ENCODE measurements at regions of chr20 and their contacts with region 1.

Region 1: DNA sequence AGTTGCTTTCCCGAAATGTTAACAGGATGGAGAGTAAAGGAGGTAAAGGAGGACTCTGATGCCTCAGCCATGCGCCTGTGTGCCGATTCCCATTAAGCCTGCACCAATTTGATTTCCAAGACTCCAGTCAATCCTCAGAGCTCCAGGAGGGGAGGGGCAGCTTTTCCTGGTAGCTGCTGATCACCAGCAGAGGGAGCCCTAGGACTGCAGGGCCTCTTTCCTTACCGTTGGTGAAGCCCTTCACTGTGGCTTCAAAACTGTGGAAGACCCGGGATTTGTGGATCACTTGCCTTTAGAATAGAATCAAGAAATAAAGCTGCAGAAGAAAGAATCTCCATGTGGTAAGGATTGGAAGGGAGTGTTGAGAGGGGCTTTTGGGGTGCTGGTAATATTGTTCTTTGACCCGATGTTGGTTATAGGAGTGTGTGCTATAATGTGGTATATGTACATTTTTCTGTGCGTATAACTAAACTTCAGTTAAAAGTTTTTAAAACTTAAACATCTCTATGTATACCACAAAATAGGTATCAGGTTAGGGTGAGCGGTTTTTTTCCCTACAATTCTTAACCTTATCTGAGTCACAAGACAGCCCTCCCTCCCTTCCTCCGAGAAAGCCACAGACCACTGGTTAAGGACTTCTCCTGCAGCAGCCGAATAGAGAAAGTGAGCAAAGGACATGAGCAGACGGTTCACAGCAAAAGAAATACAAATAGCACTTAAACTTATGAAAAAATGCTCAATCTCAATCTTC is 6.9 kb upstream of the OSER1 start:
- DNase-seq: peak; percentile 41 to 80 (median 68)
- ATAC-seq: peak; percentile 68
- H3K4me3 ChIP-seq: peak overlapping the region; percentile 57
- H3K4me3 Mint-ChIP-seq: peak overlapping the region; percentile 76 to 90 (median 86)
- H3K27ac ChIP-seq: peak overlapping the region; percentile 75
- H3K27ac Mint-ChIP-seq: peak overlapping the region; percentile 81 to 99 (median 94)
- H3K4me1 ChIP-seq: peaks cover 29 to 33% of the 10 kb centered on the region in 2 donors
- H3K4me1 Mint-ChIP-seq: peaks cover 40 to 85% (median 72%) of the 10 kb centered on the region in 7 donors
- H3K27me3 ChIP-seq: no peaks in the 10 kb centered on the region
- H3K27me3 Mint-ChIP-seq: no peaks in the 10 kb centered on the region

Region 2: DNA sequence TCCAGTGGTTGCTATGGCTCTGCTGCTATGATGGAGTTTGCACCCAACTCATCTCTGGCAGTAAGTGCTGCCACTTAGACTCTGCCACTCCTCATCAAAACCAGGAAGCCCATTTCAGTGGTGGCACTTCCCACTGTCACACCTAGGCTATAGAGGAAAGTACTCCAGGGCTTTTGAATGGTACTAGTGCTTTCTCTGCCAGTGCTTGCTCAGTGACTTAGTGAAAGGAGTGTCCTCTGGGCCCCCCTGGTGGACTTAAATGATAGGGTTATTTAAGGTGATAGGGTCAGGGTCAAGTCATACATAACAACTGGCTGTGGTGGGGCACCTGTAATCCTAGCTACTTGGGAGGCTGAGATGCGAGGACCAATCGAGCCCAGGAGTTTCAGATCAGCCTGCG is 70.7 kb after region 1 on chr20:
- CTCF ChIA-PET with region 1: interaction called, 22 read pairs
- POLR2A ChIA-PET with region 1: interaction called, 4 read pairs
- intact Hi-C with region 1: loop called in 1 of 2 experiments (anchors 1 kb)
- DNase-seq: peak in 3 of 9 donors; percentile 4 to 13 (median 7)
- ATAC-seq: no peak
- H3K4me3 ChIP-seq: no peak overlapping the region
- H3K4me3 Mint-ChIP-seq: no peak overlapping the region
- H3K27ac ChIP-seq: no peak overlapping the region
- H3K27ac Mint-ChIP-seq: no peak overlapping the region
- H3K4me1 ChIP-seq: peaks cover 0 to 5% of the 10 kb centered on the region in 2 donors
- H3K4me1 Mint-ChIP-seq: peaks cover 0 to 5% (median 0%) of the 10 kb centered on the region in 7 donors
- H3K27me3 ChIP-seq: no peaks in the 10 kb centered on the region
- H3K27me3 Mint-ChIP-seq: peaks cover 0 to 6% (median 0%) of the 10 kb centered on the region in 5 donors

Region 3: GRCh38 chr20:44326391-44327159 is 109.1 kb after region 1 on chr20:
- CTCF ChIA-PET with region 1: interaction called, 13 read pairs
- POLR2A ChIA-PET with region 1: no interaction called
- intact Hi-C with region 1: no loop called
- DNase-seq: peak in 7 of 9 donors; percentile 2 to 26 (median 16)
- ATAC-seq: peak; percentile 62
- H3K4me3 ChIP-seq: no peak overlapping the region
- H3K4me3 Mint-ChIP-seq: peak overlapping the region in 8 of 10 donors; percentile 59 to 76 (median 68)
- H3K27ac ChIP-seq: no peak overlapping the region
- H3K27ac Mint-ChIP-seq: peak overlapping the region in 2 of 9 donors; percentile 42 to 83
- H3K4me1 ChIP-seq: no peaks in the 10 kb centered on the region
- H3K4me1 Mint-ChIP-seq: peaks cover 0 to 5% (median 0%) of the 10 kb centered on the region in 7 donors
- H3K27me3 ChIP-seq: no peaks in the 10 kb centered on the region
- H3K27me3 Mint-ChIP-seq: peaks cover 0 to 11% (median 4%) of the 10 kb centered on the region in 5 donors

Region 4: DNA sequence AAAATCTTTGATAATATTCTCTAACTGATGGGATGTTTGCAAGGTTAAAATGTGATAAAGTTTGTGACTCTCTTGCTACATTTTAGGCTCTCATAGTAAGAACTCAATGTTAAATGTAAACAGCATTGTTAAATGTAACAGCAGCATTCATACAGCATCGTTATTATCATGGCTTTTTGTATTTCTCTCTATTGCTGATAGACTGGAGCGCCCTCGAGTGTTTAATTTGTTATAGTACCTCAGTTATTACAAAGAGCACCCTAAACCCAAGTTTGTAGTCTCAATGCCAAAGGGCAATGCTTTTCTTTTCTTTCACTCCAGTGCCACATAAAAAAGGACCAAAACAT is 243.3 kb after region 1 on chr20:
- CTCF ChIA-PET with region 1: interaction called, 4 read pairs
- POLR2A ChIA-PET with region 1: no interaction called
- intact Hi-C with region 1: loop called in 1 of 2 experiments (anchors 1 kb)
- DNase-seq: peak in 5 of 9 donors; percentile 16 to 31 (median 24)
- ATAC-seq: peak; percentile 34
- H3K4me3 ChIP-seq: no peak overlapping the region
- H3K4me3 Mint-ChIP-seq: no peak overlapping the region
- H3K27ac ChIP-seq: no peak overlapping the region
- H3K27ac Mint-ChIP-seq: peak overlapping the region in 1 of 9 donors; percentile 43
- H3K4me1 ChIP-seq: no peaks in the 10 kb centered on the region
- H3K4me1 Mint-ChIP-seq: no peaks in the 10 kb centered on the region
- H3K27me3 ChIP-seq: no peaks in the 10 kb centered on the region
- H3K27me3 Mint-ChIP-seq: peaks cover 0 to 5% (median 0%) of the 10 kb centered on the region in 5 donors

Region 5: DNA sequence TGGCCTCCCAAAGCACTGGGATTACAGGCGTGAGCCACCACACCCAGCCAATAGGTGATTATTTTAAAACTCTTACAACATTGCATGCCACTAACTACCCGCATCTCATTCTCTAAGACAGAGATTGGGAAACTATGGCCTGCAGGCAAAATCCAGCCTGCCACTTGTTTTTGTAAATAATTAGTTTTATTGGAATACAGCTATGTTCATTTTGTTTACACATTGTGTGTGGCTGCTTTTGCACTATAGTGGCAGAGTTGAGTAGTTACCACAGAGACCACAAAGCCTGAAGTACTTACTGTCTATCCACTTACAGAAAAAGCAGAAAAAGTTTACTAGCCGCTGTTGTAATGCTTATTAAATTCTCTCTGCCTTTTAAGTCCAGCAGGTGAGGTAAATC is 348.5 kb after region 1 on chr20:
- CTCF ChIA-PET with region 1: no interaction called
- POLR2A ChIA-PET with region 1: no interaction called
- intact Hi-C with region 1: no loop called
- DNase-seq: no peak
- ATAC-seq: no peak
- H3K4me3 ChIP-seq: no peak overlapping the region
- H3K4me3 Mint-ChIP-seq: no peak overlapping the region
- H3K27ac ChIP-seq: no peak overlapping the region
- H3K27ac Mint-ChIP-seq: no peak overlapping the region
- H3K4me1 ChIP-seq: no peaks in the 10 kb centered on the region
- H3K4me1 Mint-ChIP-seq: peaks cover 0 to 10% (median 5%) of the 10 kb centered on the region in 7 donors
- H3K27me3 ChIP-seq: no peaks in the 10 kb centered on the region
- H3K27me3 Mint-ChIP-seq: peaks cover 0 to 7% (median 0%) of the 10 kb centered on the region in 5 donors

Region 6: GRCh38 chr20:44642203-44643153 is 425.0 kb after region 1 on chr20:
- CTCF ChIA-PET with region 1: interaction called, 3 read pairs
- POLR2A ChIA-PET with region 1: interaction called, 5 read pairs
- intact Hi-C with region 1: loop called in 1 of 2 experiments (anchors 2 kb)
- DNase-seq: peak in 8 of 9 donors; percentile 28 to 54 (median 41)
- ATAC-seq: peak; percentile 33
- H3K4me3 ChIP-seq: peak overlapping the region; percentile 47
- H3K4me3 Mint-ChIP-seq: peak overlapping the region; percentile 63 to 96 (median 76)
- H3K27ac ChIP-seq: peak overlapping the region; percentile 76
- H3K27ac Mint-ChIP-seq: peak overlapping the region; percentile 90 to 98 (median 96)
- H3K4me1 ChIP-seq: peaks cover 53 to 70% of the 10 kb centered on the region in 2 donors
- H3K4me1 Mint-ChIP-seq: peaks cover 55 to 82% (median 70%) of the 10 kb centered on the region in 7 donors
- H3K27me3 ChIP-seq: no peaks in the 10 kb centered on the region
- H3K27me3 Mint-ChIP-seq: no peaks in the 10 kb centered on the region

Region 7: GRCh38 chr20:44733341-44734069 is 516.0 kb after region 1 on chr20:
- CTCF ChIA-PET with region 1: interaction called, 3 read pairs
- POLR2A ChIA-PET with region 1: no interaction called
- intact Hi-C with region 1: loop called (anchors 1 to 2 kb)
- DNase-seq: peak; percentile 34 to 73 (median 57)
- ATAC-seq: peak; percentile 77
- H3K4me3 ChIP-seq: no peak overlapping the region
- H3K4me3 Mint-ChIP-seq: no peak overlapping the region
- H3K27ac ChIP-seq: no peak overlapping the region
- H3K27ac Mint-ChIP-seq: peak overlapping the region in 1 of 9 donors; percentile 32
- H3K4me1 ChIP-seq: no peaks in the 10 kb centered on the region
- H3K4me1 Mint-ChIP-seq: peaks cover 11 to 23% (median 20%) of the 10 kb centered on the region in 7 donors
- H3K27me3 ChIP-seq: no peaks in the 10 kb centered on the region
- H3K27me3 Mint-ChIP-seq: no peaks in the 10 kb centered on the region

Measured in naive thymus-derived CD4-positive, alpha-beta T cell (primary cell).